ENCODE measurements at regions of chr11 and their contacts with region 1.

Region 1: DNA sequence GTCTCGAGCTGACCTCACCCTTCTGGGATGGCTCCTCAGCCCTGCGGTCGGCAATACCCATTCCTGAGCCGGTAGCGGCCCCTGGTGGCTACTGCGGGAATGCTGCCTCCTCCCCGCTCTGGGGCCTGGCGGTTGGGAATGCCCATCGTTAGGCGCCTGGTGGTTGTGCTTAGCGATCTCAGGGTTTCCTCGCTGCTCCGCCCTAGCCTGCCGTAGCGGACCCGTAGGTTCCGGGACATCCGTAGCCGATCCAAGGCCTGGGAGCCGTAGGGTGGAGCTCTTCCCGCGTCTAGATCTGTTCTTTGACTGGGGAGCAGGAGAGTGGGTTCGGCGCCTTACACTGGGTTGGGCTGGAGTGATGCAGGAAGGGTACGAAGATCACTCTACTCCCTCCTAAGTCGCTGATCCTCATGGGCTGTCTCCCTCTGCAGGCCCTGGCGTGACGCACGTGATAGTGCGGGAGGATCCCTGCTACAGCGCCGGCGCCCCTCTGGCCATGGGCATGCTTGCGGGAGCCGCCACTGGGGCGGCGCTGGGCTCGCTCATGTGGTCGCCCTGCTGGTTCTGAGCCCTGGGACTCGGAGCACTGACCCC is 14.8 kb downstream of the PLEKHB1 start:
- DNase-seq: peak; percentile 76
- H3K4me3 Mint-ChIP-seq: no peak overlapping the region
- H3K27ac Mint-ChIP-seq: no peak overlapping the region
- H3K4me1 Mint-ChIP-seq: no peaks in the 10 kb centered on the region
- H3K27me3 Mint-ChIP-seq: no peaks in the 10 kb centered on the region

Region 2: DNA sequence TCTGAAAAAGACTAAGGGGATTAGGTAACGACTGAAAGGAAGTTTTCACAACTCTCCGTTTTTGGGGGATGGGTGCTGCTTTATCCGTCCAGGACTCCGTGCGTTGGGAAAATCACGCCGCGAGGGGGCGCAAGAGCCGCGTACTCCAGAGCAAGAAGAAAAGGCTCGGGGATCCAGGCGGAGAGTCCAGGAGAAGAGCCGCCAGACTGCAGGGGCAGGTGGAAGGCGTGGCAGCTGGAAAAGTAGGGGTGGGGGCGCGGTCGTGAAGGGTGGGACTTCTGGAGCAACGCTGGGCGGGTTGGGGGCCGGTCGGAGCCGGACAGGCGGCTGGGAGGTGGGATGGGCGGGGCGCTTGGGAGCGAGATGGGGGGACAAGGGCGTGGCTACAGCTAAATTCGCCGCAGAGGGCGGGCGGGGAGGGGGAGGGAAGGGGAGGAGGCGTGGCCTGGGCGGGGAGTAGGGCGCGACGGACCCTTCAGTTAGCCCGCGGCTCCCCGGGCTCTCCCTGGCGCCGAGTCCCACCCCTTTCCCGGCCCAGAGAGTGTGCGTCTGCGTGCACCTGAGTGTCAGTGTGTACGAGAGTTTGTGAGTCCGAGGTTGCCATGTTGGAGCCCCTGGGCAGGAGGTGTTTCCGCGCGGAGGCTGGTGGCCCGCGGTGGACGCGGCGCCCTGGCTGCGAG is 353.7 kb before region 1 on chr11:
- intact Hi-C with region 1: loop called (anchors 1 kb)
- DNase-seq: peak; percentile 78
- H3K4me3 Mint-ChIP-seq: peak overlapping the region; percentile 87
- H3K27ac Mint-ChIP-seq: no peak overlapping the region
- H3K4me1 Mint-ChIP-seq: peaks cover 12% of the 10 kb centered on the region
- H3K27me3 Mint-ChIP-seq: peaks cover 39% of the 10 kb centered on the region

Region 3: DNA sequence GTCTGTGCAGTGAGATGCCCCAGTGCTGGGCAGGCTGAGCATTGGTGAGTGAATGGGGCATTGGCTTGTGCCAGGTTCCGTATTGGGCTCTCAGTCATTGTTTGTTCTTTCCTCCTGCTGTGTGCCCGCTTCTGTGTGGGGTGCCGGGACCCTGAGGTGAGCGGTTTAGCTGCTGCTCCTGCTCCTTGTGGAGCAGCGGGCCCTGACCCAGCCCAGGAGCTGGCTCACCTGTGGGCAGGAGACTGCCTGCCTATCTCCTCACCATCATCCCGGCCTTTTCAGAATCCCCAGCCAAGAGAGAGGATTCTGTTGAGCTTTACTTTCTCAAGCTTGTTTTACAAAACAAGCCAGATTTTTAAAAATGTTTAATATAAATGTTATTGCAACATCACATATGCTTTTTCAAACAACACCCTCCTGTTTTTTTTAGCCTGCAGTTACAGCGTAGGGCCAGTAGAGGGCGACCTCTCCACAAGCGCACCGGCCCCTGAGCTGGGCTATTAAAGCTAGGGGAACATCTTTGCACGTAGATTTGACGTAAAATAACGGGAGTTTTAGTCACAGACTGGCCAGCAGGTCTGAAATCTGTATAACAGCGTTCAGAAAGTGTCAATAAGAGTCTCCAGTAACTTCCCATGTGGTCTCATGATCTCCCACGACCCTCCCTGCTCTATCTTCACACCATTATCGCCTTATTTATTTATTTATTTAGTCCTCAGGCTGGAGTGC is 310.1 kb before region 1 on chr11:
- intact Hi-C with region 1: loop called (anchors 1 kb)
- DNase-seq: peak; percentile 46
- H3K4me3 Mint-ChIP-seq: no peak overlapping the region
- H3K27ac Mint-ChIP-seq: no peak overlapping the region
- H3K4me1 Mint-ChIP-seq: peaks cover 23% of the 10 kb centered on the region
- H3K27me3 Mint-ChIP-seq: peaks cover 8% of the 10 kb centered on the region

Region 4: DNA sequence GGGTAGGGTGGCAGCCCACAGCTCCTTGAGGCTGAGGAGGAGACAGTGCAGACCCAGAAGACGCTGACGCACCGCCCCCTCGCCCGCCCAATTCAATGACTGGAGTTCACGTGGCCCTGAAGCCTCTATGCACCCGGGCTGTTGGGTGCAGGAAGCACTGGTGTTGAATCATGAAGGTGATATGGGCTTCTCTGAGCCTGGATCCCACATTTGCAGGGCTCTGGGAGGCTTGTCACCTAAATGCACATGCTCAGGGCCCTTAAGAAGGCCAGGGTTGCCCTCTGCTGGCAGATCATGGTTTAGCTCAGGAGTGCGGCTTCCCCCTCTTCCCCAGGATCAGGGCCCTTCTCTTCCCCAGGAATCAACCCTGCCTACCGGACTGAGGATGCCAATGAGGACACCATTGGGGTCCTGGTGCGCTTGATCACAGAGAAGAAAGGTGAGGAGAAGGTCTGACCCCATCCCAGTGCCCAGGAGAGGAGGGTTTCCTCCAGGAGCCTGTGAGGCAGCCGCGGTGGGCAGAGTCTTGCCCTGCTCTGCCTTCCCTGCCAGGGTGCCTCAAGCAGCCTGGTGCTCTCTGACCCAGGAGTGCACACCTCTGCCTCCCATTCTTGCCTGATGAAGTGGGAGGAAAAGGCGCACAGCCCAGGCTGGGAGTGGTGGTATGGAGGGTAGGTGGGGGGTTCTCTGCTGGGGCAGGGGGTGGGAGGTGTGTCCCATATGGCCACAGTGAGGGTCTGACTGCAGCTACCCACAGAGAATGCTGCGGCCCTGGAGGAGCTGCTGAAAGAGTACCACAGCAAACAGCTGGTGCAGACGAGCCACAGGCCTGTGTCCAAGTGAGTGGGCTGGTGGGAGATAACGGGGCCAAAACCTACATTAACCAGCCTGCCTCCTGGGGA is 267.4 kb before region 1 on chr11:
- intact Hi-C with region 1: loop called (anchors 2 kb)
- DNase-seq: peak; percentile 55
- H3K4me3 Mint-ChIP-seq: no peak overlapping the region
- H3K27ac Mint-ChIP-seq: no peak overlapping the region
- H3K4me1 Mint-ChIP-seq: peaks cover 6% of the 10 kb centered on the region
- H3K27me3 Mint-ChIP-seq: no peaks in the 10 kb centered on the region

Region 5: DNA sequence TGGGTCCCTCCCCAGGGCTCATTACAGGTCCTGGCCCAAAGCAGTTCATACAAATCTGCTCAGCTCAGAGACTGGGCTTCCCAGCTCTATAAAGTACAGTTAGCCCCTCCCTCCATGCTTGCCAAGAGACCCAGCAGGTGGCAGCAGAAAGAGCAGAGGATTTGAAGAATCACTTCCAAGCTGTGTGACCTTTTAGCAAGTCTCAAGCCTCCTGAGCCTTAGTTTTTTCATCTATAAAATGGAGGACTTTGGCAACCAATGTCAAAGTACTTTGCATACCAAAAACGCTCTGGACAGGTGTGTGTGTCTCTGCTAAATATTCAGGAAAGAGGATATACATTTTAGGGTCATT is 258.3 kb before region 1 on chr11:
- intact Hi-C with region 1: loop called (anchors 1 kb)
- DNase-seq: no peak
- H3K4me3 Mint-ChIP-seq: no peak overlapping the region
- H3K27ac Mint-ChIP-seq: no peak overlapping the region
- H3K4me1 Mint-ChIP-seq: peaks cover 8% of the 10 kb centered on the region
- H3K27me3 Mint-ChIP-seq: no peaks in the 10 kb centered on the region

Region 6: DNA sequence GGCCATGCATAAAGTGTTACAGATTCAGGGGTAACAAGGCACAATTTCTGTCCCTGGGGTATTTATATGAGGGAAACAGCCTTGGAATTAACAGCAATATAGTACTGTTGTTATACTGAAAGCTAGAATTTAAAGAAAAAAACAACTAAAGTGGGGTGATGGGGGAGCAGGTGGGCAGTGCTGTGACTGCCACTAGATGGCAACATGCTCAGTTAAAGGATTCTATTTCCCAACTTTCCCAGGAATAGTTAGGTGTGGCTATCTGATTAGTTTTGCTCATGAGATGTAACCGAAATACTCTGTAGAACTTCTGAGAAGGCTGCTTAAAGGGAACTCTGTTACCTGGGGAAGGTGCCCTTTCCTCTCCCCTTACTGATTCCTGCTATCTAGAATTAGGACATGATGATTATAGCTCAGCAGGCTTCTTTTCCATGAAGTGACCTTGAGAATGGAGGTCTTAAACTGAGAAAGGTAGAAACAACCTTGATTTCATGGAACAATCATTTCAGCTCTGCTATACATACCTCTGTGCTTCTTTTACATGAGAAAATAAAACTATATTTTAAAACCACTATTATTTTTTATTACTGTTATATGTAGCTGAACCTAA is 182.3 kb before region 1 on chr11:
- intact Hi-C with region 1: loop called (anchors 5 kb)
- DNase-seq: no peak
- H3K4me3 Mint-ChIP-seq: no peak overlapping the region
- H3K27ac Mint-ChIP-seq: no peak overlapping the region
- H3K4me1 Mint-ChIP-seq: no peaks in the 10 kb centered on the region
- H3K27me3 Mint-ChIP-seq: peaks cover 8% of the 10 kb centered on the region

Region 7: DNA sequence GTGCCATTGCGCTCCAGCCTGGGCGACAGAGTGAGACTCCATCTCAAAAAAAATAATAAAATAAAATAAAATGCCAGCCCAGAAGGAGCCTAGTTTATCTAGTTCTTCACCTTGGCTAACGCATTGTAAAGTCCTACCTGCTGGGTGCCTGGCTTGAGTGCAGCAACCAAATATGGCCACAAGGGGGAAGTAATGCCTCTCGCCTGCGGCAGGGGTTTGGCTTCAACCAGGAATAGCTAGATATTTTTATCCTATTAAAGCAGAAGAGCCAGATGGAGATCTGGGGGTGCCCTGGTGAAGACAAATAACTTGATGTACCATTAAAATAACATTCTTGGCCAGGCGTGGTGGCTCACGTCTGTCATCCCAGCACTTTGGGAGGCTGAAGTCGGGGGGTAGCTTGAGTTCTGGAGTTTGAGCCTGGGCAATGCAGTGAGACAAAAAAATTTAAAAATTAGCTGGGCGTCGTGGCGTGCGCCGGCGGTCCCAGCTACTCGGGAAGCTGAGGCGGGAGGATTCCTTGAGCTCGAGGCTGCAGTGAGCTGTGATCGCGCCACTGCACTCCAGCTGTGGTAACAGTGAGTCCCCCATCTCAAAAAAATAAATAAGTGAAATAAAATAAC is 35.3 kb before region 1 on chr11:
- intact Hi-C with region 1: loop called (anchors 1 kb)
- DNase-seq: peak; percentile 34
- H3K4me3 Mint-ChIP-seq: no peak overlapping the region
- H3K27ac Mint-ChIP-seq: no peak overlapping the region
- H3K4me1 Mint-ChIP-seq: peaks cover 4% of the 10 kb centered on the region
- H3K27me3 Mint-ChIP-seq: peaks cover 30% of the 10 kb centered on the region

Region 8: GRCh38 chr11:74449369-74449931 is 788.3 kb after region 1 on chr11:
- intact Hi-C with region 1: no loop called
- DNase-seq: peak; percentile 12
- H3K4me3 Mint-ChIP-seq: no peak overlapping the region
- H3K27ac Mint-ChIP-seq: no peak overlapping the region
- H3K4me1 Mint-ChIP-seq: peaks cover 7% of the 10 kb centered on the region
- H3K27me3 Mint-ChIP-seq: peaks cover 12% of the 10 kb centered on the region

Measured in activated T-helper 1 cell treated with anti-CD3 and anti-CD28 coated beads, Interleukin-12 subunit alpha, Interleukin-12 subunit beta, Interleukin-2, Interleukin-4 antibody, amounts not matched to agents 30 ng/mL and 10 ng/mL and 1 ng/mL, durations not matched to agents 14 hours and 24 hours and 36 hours (primary cell).